ENCODE measurements at regions of chr10 and their contacts with region 1.

Region 1: GRCh38 chr10:84537447-84537931 is 209.1 kb downstream of the CCSER2 start:
- DNase-seq: peak; percentile 44 to 60 (median 57)
- H3K4me3 ChIP-seq: no peak overlapping the region
- H3K4me3 Mint-ChIP-seq: peak overlapping the region in 1 of 8 donors; percentile 54
- H3K27ac ChIP-seq: no peak overlapping the region
- H3K27ac Mint-ChIP-seq: no peak overlapping the region
- H3K4me1 ChIP-seq: peaks cover 7% of the 10 kb centered on the region
- H3K4me1 Mint-ChIP-seq: peaks cover 7 to 14% (median 9%) of the 10 kb centered on the region in 4 donors
- H3K27me3 ChIP-seq: no peaks in the 10 kb centered on the region
- H3K27me3 Mint-ChIP-seq: peaks cover 8 to 23% of the 10 kb centered on the region in 2 donors

Region 2: GRCh38 chr10:83108565-83109333 is 1428.7 kb before region 1 on chr10:
- CTCF ChIA-PET with region 1: no interaction called
- POLR2A ChIA-PET with region 1: no interaction called
- intact Hi-C with region 1: no loop called
- DNase-seq: no peak
- H3K4me3 ChIP-seq: no peak overlapping the region
- H3K4me3 Mint-ChIP-seq: no peak overlapping the region
- H3K27ac ChIP-seq: no peak overlapping the region
- H3K27ac Mint-ChIP-seq: no peak overlapping the region
- H3K4me1 ChIP-seq: no peaks in the 10 kb centered on the region
- H3K4me1 Mint-ChIP-seq: no peaks in the 10 kb centered on the region
- H3K27me3 ChIP-seq: no peaks in the 10 kb centered on the region
- H3K27me3 Mint-ChIP-seq: no peaks in the 10 kb centered on the region

Region 3: GRCh38 chr10:84256510-84257342 is 280.8 kb before region 1 on chr10:
- CTCF ChIA-PET with region 1: interaction called, 326 read pairs
- POLR2A ChIA-PET with region 1: no interaction called
- intact Hi-C with region 1: no loop called
- DNase-seq: peak in 3 of 5 donors; percentile 16 to 20 (median 16)
- H3K4me3 ChIP-seq: no peak overlapping the region
- H3K4me3 Mint-ChIP-seq: peak overlapping the region in 1 of 8 donors; percentile 33
- H3K27ac ChIP-seq: no peak overlapping the region
- H3K27ac Mint-ChIP-seq: no peak overlapping the region
- H3K4me1 ChIP-seq: no peaks in the 10 kb centered on the region
- H3K4me1 Mint-ChIP-seq: peaks cover 2 to 11% (median 6%) of the 10 kb centered on the region in 4 donors
- H3K27me3 ChIP-seq: no peaks in the 10 kb centered on the region
- H3K27me3 Mint-ChIP-seq: peaks cover 9 to 21% of the 10 kb centered on the region in 2 donors

Region 4: GRCh38 chr10:84352251-84352842 is 185.1 kb before region 1 on chr10:
- CTCF ChIA-PET with region 1: interaction called, 58 read pairs
- POLR2A ChIA-PET with region 1: no interaction called
- intact Hi-C with region 1: loop called (anchors 1 kb)
- DNase-seq: peak; percentile 52 to 78 (median 60)
- H3K4me3 ChIP-seq: no peak overlapping the region
- H3K4me3 Mint-ChIP-seq: peak overlapping the region in 2 of 8 donors; percentile 34 to 40
- H3K27ac ChIP-seq: no peak overlapping the region
- H3K27ac Mint-ChIP-seq: peak overlapping the region; percentile 4 to 85 (median 22)
- H3K4me1 ChIP-seq: peaks cover 56% of the 10 kb centered on the region
- H3K4me1 Mint-ChIP-seq: peaks cover 43 to 77% (median 60%) of the 10 kb centered on the region in 4 donors
- H3K27me3 ChIP-seq: no peaks in the 10 kb centered on the region
- H3K27me3 Mint-ChIP-seq: no peaks in the 10 kb centered on the region

Region 5: GRCh38 chr10:84391326-84391725 is 146.2 kb before region 1 on chr10:
- CTCF ChIA-PET with region 1: interaction called, 14 read pairs
- POLR2A ChIA-PET with region 1: no interaction called
- intact Hi-C with region 1: no loop called
- DNase-seq: no peak
- H3K4me3 ChIP-seq: no peak overlapping the region
- H3K4me3 Mint-ChIP-seq: no peak overlapping the region
- H3K27ac ChIP-seq: no peak overlapping the region
- H3K27ac Mint-ChIP-seq: no peak overlapping the region
- H3K4me1 ChIP-seq: peaks cover 7% of the 10 kb centered on the region
- H3K4me1 Mint-ChIP-seq: peaks cover 35 to 62% (median 45%) of the 10 kb centered on the region in 4 donors
- H3K27me3 ChIP-seq: no peaks in the 10 kb centered on the region
- H3K27me3 Mint-ChIP-seq: no peaks in the 10 kb centered on the region

Region 6: DNA sequence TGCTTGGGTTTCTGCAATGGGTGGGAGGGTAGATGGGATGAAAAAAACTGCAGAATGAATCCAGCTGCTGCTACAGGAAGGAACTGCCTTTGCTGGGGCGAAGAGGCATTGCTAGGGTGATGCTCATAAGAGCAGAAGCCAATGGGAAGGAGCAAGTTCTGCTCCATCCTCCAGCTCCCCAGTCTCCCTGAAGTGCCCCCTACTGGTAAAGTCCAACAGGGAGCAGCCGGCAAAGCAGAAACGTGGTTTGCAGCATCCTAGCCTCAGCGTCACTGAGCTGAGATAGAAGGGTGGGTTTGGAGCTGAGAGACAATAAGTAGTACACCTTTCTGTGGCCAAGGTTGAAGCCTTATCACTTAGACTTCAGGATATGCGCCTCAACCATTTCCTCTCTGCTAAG is 11.4 kb after region 1 on chr10:
- CTCF ChIA-PET with region 1: interaction called, 84 read pairs
- POLR2A ChIA-PET with region 1: no interaction called
- intact Hi-C with region 1: no loop called
- DNase-seq: no peak
- H3K4me3 ChIP-seq: no peak overlapping the region
- H3K4me3 Mint-ChIP-seq: no peak overlapping the region
- H3K27ac ChIP-seq: no peak overlapping the region
- H3K27ac Mint-ChIP-seq: no peak overlapping the region
- H3K4me1 ChIP-seq: no peaks in the 10 kb centered on the region
- H3K4me1 Mint-ChIP-seq: no peaks in the 10 kb centered on the region
- H3K27me3 ChIP-seq: no peaks in the 10 kb centered on the region
- H3K27me3 Mint-ChIP-seq: peaks cover 9 to 12% of the 10 kb centered on the region in 2 donors